Ovary (tissue), 10 donors: ENCODE measurements at regions of chr10 and their contacts with region 1.

Region 1: DNA sequence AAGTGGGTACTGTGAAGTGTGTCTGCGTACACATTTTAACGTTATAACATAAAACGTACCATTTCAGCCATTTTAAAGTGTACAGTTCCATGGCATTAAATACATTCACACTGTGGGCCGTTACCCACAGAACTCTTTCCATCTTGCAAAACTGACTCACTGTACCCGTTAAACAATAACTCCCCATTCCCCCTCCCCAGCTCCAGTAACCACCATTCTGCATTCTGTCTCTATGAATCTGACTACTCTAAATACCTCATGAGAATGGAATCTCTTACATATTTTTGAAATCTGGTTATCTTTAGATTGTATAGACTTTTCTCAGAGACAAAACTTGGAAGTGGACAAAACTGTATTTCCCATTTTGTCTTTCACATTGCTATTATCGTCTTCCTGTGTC is 9.3 kb downstream of the ARL3 start:
- DNase-seq: no peak
- H3K4me3 ChIP-seq: no peak overlapping the region
- H3K27ac ChIP-seq: no peak overlapping the region
- H3K4me1 ChIP-seq: peaks cover 8% of the 10 kb centered on the region
- H3K27me3 ChIP-seq: no peaks in the 10 kb centered on the region
- CTCF ChIP-seq: no peak
- EP300 ChIP-seq: no peak
- POLR2A ChIP-seq: no peak

Region 2: DNA sequence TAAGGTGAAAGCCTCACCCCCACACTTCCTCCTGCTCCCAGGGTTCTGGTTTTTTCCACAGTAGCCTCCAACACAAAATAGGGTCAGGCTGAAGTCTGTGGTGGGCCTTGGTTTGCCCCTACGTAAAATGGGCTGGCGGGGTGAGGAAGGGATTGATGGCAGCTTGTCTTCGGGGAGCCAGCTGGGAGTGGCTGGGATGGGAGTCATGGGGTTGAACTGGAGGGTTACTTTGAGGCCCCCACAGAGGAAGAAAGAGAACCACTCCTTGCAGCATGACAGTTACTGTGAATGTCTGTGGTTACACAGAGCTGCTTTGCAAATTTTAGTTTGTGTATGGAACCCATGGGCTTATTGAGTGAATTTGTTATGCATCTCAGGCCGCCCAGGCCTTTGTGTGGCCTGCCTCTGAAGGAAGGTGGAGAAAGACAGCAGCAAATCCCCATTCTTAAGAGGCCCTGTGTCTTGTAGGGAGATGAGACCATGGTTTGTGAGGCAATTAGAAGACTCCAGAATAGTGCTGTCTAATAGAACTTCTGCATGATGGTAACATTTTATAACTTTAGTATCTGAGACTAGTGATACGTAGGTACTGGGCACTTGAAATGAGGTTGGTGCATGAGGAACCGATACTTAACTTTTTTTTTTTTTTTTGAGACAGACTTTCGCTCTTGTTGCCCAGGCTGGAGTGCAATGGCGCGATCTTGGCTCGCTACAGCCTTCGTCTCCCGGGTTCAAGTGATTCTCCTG is 52.6 kb before region 1 on chr10:
- intact Hi-C with region 1: loop called in 3 of 4 experiments (anchors 5 to 10 kb)
- DNase-seq: no peak
- H3K4me3 ChIP-seq: no peak overlapping the region
- H3K27ac ChIP-seq: no peak overlapping the region
- H3K4me1 ChIP-seq: peaks cover 32% of the 10 kb centered on the region
- H3K27me3 ChIP-seq: no peaks in the 10 kb centered on the region
- CTCF ChIP-seq: no peak
- EP300 ChIP-seq: no peak
- POLR2A ChIP-seq: no peak

Region 3: GRCh38 chr10:103278862-103279298 is 574.0 kb after region 1 on chr10:
- intact Hi-C with region 1: no loop called
- DNase-seq: peak; percentile 27 to 77 (median 55)
- H3K4me3 ChIP-seq: no peak overlapping the region
- H3K27ac ChIP-seq: no peak overlapping the region
- H3K4me1 ChIP-seq: peaks cover 8% of the 10 kb centered on the region
- H3K27me3 ChIP-seq: no peaks in the 10 kb centered on the region
- CTCF ChIP-seq: no peak
- EP300 ChIP-seq: no peak
- POLR2A ChIP-seq: no peak